Posterior cingulate gyrus (tissue), 11 donors: ENCODE measurements at regions of chr1 and their contacts with region 1.

Region 1: GRCh38 chr1:222736972-222737371 is at the start of gene FAM177B:
- DNase-seq: no peak

Region 2: DNA sequence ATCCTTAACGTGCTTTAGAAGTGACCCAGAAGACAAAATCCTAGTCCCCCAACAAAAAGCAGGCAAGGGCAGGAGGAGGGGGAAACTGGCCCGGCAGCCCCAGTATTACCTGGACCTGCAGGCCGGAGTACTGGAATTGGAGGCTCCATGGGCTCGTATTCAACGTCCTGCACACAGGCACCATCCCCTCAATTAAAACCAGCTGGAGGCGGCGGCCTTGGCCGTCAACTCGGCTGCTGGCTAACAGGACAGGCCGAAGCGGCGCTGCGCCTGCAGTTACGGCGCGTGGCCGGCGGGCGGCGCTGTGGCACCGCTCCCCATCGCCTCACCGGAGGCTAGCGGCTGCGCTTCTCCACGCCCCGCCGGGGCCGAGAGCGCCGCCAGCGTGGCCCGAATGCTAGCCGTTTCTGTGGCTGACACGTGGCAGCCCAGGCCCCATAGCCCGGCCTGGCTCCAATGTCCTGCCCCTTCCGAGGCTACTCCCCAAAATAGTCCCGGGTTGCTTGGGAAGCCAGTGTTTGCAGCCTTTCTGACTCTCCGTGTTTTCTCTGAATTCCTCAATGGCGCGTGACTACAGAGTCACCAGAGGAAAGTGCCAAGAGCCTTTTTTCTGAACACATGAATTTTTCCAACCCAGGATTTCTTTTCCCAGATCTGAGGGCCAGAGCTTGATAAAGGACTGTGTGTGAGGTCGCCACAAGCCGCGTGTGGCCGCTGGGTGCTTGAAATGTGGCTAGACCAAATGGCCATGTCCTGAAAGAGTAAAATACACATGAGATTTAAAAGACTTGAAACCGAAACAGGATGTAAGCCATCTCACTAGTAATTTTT is 271.5 kb before region 1 on chr1:
- intact Hi-C with region 1: no loop called
- DNase-seq: peak; percentile 77 to 98 (median 85)

Region 3: DNA sequence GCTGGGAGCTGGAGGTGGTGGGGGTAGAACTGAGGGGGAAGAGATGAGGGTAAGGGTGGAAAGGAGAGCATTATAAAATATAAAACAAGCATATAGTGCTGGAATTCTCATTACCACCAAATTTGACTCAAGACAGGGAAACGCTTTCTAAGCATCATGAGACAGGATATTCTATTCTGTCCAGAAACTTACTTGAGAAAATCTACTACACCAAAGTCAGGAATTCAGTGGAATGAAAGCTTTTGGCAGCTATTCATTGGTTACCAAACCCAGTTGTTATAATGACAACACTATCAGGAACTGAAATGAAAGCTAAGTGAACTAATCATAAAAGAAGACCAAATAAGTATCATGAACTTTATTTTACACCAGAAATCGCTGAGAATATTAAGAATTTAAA is 39.1 kb before region 1 on chr1:
- intact Hi-C with region 1: no loop called
- DNase-seq: no peak

Region 4: DNA sequence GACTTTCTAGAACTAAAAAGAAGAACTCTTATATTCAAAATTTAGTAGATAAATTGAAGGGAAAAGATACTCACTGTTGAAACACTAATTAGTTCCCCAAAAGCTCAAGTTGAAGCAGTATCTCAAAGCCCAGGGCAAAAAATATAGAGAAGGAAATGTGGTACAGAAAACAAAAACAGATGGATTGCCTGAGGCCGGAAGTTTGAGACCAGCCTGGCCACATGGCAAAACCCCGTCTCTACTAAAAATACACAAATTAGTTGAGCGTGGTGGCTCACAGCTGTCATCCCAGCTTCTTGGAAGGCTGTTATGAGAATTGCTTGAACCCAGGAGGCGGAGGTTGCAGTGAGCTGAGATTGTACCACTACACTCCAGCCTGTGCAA is 36.0 kb after region 1 on chr1:
- intact Hi-C with region 1: no loop called
- DNase-seq: no peak

Region 5: DNA sequence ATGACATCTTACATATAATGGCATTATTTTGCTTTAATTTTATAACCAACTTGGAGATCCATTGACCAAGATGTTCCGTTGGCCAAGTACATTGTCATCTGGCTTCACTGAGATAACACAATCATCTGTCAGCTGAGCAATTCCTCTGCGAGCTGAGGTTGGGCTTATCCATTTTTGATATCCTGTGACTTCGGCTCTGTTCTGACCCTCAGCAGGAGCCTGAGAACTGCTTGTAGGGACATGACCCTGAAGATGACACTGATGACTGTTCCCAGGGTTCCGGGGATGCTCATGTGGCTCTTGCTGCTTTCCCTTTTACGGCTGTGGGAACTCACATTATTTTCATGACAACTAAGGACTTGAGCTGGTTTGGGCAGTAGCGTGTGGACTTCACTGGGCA is 354.9 kb after region 1 on chr1:
- intact Hi-C with region 1: loop called (anchors 5 kb)
- DNase-seq: no peak